ENCODE measurements at regions of chr13 and their contacts with region 1.

Region 1: DNA sequence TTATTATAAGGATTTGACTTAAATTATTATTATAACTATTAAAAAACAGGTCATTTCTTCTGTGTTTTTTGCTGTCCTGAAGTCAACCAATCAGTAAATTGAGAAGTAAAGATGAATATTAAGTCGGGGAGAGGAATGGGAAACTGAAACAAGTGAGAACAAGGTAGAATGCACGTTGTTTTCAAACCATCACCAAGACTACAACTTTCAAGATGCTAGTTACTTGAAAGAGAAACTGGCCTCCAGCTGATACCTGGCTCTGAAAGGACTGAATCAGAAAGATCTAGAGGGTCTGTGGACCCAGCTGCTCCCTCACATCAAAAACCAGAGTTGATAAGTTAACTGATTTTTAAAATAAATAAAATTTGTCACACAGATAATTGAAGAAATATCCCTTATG is 1301.5 kb upstream of the ATXN8OS start:
- DNase-seq: no peak
- ATAC-seq: no peak
- H3K4me3 ChIP-seq: no peak overlapping the region
- H3K4me3 Mint-ChIP-seq: no peak overlapping the region
- H3K27ac ChIP-seq: no peak overlapping the region
- H3K27ac Mint-ChIP-seq: no peak overlapping the region
- H3K4me1 ChIP-seq: no peaks in the 10 kb centered on the region
- H3K4me1 Mint-ChIP-seq: no peaks in the 10 kb centered on the region
- H3K27me3 ChIP-seq: no peaks in the 10 kb centered on the region
- H3K27me3 Mint-ChIP-seq: no peaks in the 10 kb centered on the region
- CTCF ChIP-seq: no peak

Region 2: DNA sequence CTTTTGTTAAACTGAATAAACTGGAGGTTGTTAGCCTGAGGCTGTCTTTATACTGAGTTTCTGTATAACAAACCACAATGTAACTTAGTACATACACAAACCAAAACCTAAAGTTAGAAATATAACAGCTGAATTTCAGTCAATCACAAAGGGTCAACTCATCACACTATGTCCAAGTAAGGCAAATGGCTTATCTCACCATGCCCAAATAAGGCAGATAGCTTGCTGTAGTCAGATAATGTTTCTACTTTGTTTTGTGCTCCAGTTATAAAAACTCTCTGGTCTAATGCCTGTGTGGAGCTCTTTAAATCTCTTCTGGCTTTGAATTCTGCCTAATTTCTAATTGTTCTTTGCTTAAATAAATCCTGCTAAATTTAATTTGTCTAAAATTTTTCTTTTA is 21.9 kb before region 1 on chr13:
- CTCF ChIA-PET with region 1: no interaction called
- POLR2A ChIA-PET with region 1: no interaction called
- intact Hi-C with region 1: loop called in 1 of 2 experiments (anchors 1 kb)
- DNase-seq: no peak
- ATAC-seq: no peak
- H3K4me3 ChIP-seq: no peak overlapping the region
- H3K4me3 Mint-ChIP-seq: no peak overlapping the region
- H3K27ac ChIP-seq: no peak overlapping the region
- H3K27ac Mint-ChIP-seq: no peak overlapping the region
- H3K4me1 ChIP-seq: no peaks in the 10 kb centered on the region
- H3K4me1 Mint-ChIP-seq: no peaks in the 10 kb centered on the region
- H3K27me3 ChIP-seq: no peaks in the 10 kb centered on the region
- H3K27me3 Mint-ChIP-seq: no peaks in the 10 kb centered on the region
- CTCF ChIP-seq: no peak

Region 3: DNA sequence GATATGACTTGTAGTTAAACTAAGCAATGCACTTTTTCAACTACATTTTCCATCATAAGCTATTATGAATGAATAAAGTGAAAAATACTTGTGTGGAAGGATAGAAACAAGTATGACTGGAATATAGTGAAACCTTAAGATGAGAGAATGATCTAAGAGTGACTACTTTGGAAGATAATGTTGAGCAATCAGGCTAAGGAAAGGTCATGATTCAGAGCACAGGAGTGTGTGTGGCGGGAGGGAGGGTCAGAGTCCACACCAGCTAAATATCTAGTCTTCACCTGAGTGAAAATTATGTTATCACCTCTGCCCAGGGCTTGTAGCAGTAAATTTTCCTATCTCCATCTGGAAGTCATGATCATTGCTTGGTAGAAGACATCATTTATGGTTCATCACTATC is 468.1 kb after region 1 on chr13:
- CTCF ChIA-PET with region 1: no interaction called
- POLR2A ChIA-PET with region 1: no interaction called
- intact Hi-C with region 1: no loop called
- DNase-seq: no peak
- ATAC-seq: no peak
- H3K4me3 ChIP-seq: no peak overlapping the region
- H3K4me3 Mint-ChIP-seq: no peak overlapping the region
- H3K27ac ChIP-seq: no peak overlapping the region
- H3K27ac Mint-ChIP-seq: no peak overlapping the region
- H3K4me1 ChIP-seq: no peaks in the 10 kb centered on the region
- H3K4me1 Mint-ChIP-seq: no peaks in the 10 kb centered on the region
- H3K27me3 ChIP-seq: no peaks in the 10 kb centered on the region
- H3K27me3 Mint-ChIP-seq: no peaks in the 10 kb centered on the region
- CTCF ChIP-seq: no peak

Measured in CD4-positive, alpha-beta T cell (primary cell).